Activated CD4-positive, alpha-beta memory T cell treated with anti-CD3 and anti-CD28 coated beads for 36 hours (primary cell): ENCODE measurements at regions of chr5 and their contacts with region 1.

Region 1: GRCh38 chr5:140564196-140565023 is at the starts of genes APBB3 and SLC35A4:
- DNase-seq: peak; percentile 98
- H3K4me3 Mint-ChIP-seq: peak within 1 kb of the TSS; percentile 91
- H3K27ac Mint-ChIP-seq: peak within 1 kb of the TSS; percentile 93
- H3K4me1 Mint-ChIP-seq: peaks cover 47% of the 10 kb centered on the region
- H3K27me3 Mint-ChIP-seq: no peaks in the 10 kb centered on the region
- total RNA-seq, gene APBB3: 16.3 to 16.8 TPM
- total RNA-seq, gene SLC35A4: 68.7 to 69.7 TPM

Region 2: DNA sequence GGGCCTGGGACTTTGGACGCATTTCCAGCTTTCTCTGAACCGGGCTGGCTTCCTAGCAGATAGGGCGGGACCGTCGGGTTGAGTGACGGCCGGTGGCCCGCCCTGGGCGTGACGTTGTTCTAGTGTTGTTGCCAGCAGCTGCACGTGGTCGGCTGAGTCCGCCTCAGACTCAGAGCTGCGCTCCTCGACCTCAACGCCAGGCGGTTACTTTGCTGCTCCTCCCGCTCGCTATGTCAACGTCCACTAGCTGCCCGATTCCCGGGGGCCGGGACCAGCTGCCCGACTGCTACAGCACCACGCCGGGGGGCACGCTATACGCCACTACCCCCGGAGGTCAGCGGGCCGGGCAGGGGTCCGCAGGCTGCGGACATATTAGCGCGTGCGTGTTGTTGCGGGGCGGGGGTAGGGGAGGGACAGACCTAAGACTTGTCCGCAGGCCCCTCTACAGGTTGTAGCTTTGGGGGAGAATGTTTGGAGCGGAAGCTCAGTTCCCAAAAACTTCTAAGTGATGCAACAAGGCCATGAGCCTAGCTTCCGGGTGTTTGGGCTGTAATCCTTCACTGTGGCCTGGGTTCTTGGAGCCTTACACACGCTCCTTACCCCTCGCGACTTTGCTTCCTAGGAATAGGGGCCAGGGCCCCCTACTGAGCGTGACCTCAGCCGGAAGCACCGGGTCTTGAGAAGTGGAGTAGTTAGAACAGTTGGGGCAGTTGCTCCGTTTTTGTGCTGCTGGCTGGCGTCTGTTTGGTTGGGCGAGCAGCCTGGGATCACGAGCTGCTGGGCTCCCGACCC is 16.7 kb before region 1 on chr5 and contains the start of gene EIF4EBP3:
- CTCF ChIA-PET with region 1: interaction called, 24 read pairs
- POLR2A ChIA-PET with region 1: interaction called, 6 read pairs
- intact Hi-C with region 1: loop called (anchors 1 kb)
- DNase-seq: peak; percentile 91
- H3K4me3 Mint-ChIP-seq: peak within 1 kb of the TSS; percentile 76
- H3K27ac Mint-ChIP-seq: peak within 1 kb of the TSS; percentile 90
- H3K4me1 Mint-ChIP-seq: peaks cover 44% of the 10 kb centered on the region
- H3K27me3 Mint-ChIP-seq: no peaks in the 10 kb centered on the region
- total RNA-seq, gene EIF4EBP3: 15.7 to 16.6 TPM

Region 3: DNA sequence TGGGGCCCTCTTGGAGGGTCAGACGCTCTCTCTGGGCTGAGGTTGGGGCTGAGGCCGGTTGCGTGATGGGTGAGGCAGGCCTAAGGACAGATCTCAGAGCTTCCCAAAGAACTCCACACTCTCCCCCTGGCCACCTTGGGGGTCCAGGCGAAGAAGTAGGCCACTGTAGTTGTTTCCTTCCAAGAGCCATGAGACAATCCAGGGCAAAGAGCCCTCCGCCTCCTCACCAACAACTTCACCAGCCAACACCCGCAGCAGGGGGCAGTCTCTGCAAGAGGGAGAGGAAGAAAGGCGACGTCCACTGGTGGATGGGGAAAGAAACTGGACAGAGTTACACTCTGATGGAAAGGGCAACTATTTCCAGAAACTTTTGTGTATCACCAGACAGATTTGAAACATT is 10.9 kb after region 1 on chr5:
- CTCF ChIA-PET with region 1: no interaction called
- POLR2A ChIA-PET with region 1: no interaction called
- intact Hi-C with region 1: no loop called
- DNase-seq: peak; percentile 35
- H3K4me3 Mint-ChIP-seq: no peak overlapping the region
- H3K27ac Mint-ChIP-seq: no peak overlapping the region
- H3K4me1 Mint-ChIP-seq: peaks cover under 1% of the 10 kb centered on the region
- H3K27me3 Mint-ChIP-seq: peaks cover 1% of the 10 kb centered on the region